ENCODE measurements at regions of chr9 and their contacts with region 1.

Region 1: DNA sequence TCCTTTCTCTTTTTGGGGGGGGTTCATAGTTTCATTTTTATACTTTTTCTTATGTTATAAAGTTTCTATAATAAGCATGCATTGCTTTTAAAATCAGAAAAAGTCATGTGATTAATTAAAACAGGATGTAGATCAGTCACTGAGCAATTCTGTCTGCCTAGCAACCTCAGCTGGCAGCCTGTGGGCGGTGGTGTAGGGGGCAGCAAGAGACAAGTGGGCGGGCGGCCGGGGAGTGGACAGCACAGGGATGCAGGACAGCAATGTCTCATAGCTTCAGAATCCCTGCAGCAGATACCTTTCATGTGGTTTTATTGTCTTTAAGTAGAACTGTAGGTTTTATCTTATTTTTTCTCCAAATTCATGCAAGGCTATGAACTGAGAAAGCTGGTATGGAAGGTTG is 101.9 kb upstream of the S1PR3 start:
- DNase-seq: peak; percentile 9
- H3K4me3 ChIP-seq: no peak overlapping the region
- H3K27ac ChIP-seq: no peak overlapping the region
- H3K4me1 ChIP-seq: no peaks in the 10 kb centered on the region
- H3K27me3 ChIP-seq: no peaks in the 10 kb centered on the region
- CTCF ChIP-seq: no peak
- POLR2A ChIP-seq: no peak

Region 2: GRCh38 chr9:88741335-88741734 is 148.1 kb before region 1 on chr9:
- CTCF ChIA-PET with region 1: no interaction called
- POLR2A ChIA-PET with region 1: no interaction called
- dilution Hi-C with region 1: no loop called
- intact Hi-C with region 1: no loop called
- DNase-seq: no peak
- H3K4me3 ChIP-seq: no peak overlapping the region
- H3K27ac ChIP-seq: no peak overlapping the region
- H3K4me1 ChIP-seq: peaks cover 2% of the 10 kb centered on the region
- H3K27me3 ChIP-seq: no peaks in the 10 kb centered on the region
- CTCF ChIP-seq: peak; percentile 27 to 46
- POLR2A ChIP-seq: no peak

Region 3: DNA sequence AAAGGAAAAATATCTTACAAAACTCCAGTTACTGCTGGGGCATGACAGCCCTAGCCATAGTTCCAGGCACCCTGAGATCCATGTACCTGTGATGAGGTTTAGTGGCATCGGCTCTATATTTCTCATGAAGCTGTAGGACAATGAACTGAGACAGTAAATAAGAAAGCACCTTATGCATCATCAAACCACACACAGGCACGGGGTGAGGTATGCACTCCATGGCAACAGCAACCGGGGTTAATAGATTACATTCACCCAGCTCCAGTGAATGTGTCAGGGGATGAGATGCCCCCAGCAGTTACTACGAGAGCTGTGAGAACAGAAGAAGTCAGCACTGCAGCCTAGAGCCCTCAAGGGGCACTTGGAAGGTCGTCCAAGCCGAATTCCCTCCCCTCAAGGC is 60.1 kb before region 1 on chr9:
- CTCF ChIA-PET with region 1: interaction called, 3 read pairs
- POLR2A ChIA-PET with region 1: no interaction called
- dilution Hi-C with region 1: no loop called
- intact Hi-C with region 1: loop called (anchors 10 kb)
- DNase-seq: no peak
- H3K4me3 ChIP-seq: no peak overlapping the region
- H3K27ac ChIP-seq: no peak overlapping the region
- H3K4me1 ChIP-seq: peaks cover 6% of the 10 kb centered on the region
- H3K27me3 ChIP-seq: no peaks in the 10 kb centered on the region
- CTCF ChIP-seq: no peak
- POLR2A ChIP-seq: no peak

Region 4: DNA sequence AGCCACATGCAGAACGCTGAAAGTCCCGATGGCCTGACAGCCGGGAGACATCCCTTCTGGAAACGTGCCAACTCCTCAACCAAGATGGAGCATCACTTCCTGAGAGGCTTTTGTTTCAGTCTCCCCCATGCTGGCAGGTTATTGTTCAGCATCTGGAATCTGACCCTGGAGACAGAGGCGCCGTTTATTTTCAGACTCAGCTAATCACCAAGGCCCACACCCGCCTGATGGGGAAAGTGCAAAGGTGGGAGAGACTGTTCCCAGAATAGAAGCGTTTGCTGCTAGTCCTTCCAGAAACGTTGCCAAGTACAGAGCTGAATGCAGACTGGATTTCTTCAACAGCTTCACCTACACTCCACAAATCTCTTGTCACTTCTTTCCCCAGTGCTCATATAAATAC is 60.0 kb after region 1 on chr9:
- CTCF ChIA-PET with region 1: no interaction called
- POLR2A ChIA-PET with region 1: no interaction called
- dilution Hi-C with region 1: no loop called
- intact Hi-C with region 1: loop called (anchors 10 kb)
- DNase-seq: peak; percentile 81
- H3K4me3 ChIP-seq: no peak overlapping the region
- H3K27ac ChIP-seq: no peak overlapping the region
- H3K4me1 ChIP-seq: no peaks in the 10 kb centered on the region
- H3K27me3 ChIP-seq: peaks cover 0 to 2% of the 10 kb centered on the region in 2 experiments
- CTCF ChIP-seq: no peak
- POLR2A ChIP-seq: no peak

Region 5: DNA sequence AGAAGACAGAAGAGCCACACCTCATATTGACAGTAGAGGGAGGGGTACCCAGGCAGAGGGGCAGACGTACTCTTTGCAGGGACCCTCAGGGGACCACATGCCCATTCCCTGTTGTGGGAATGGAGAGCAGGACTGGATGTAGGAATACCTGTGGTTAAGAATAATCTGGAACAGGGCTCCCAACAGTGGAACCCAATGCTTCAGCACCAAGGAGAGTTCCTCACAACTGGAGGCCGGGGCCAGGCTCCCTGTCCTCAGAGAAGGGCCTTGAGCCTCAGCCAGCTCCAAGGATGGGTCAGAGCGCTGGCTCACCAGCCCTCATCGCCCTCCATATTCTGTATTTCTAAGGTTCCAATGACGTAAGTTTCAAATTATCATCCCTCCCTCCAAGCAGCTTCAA is 296.6 kb after region 1 on chr9:
- CTCF ChIA-PET with region 1: no interaction called
- POLR2A ChIA-PET with region 1: no interaction called
- dilution Hi-C with region 1: no loop called
- intact Hi-C with region 1: no loop called
- DNase-seq: no peak
- H3K4me3 ChIP-seq: no peak overlapping the region
- H3K27ac ChIP-seq: no peak overlapping the region
- H3K4me1 ChIP-seq: no peaks in the 10 kb centered on the region
- H3K27me3 ChIP-seq: no peaks in the 10 kb centered on the region
- CTCF ChIP-seq: no peak
- POLR2A ChIP-seq: no peak